Right cardiac atrium (tissue), 5 donors: ENCODE measurements at regions of chr9 and their contacts with region 1.

Region 1: DNA sequence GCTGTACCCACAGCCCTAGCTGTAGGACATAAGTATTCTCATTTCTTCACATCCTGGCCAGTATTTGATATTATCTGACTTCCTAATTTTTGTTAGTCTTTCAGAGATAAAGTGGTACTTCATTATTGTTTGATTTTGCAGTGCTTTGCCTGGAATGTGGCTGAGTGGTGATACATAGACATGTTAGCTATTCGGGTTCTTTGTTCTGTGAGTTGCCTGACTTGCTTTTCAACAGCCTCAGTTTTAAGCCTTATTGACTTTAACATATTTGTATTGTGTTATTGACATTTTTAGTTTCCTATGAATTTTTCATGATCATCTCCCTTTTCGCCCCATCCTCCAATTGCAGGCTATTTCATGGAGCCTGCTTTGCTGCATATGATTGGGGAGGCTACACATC is 161.1 kb downstream of the GABBR2 start:
- DNase-seq: no peak
- ATAC-seq: no peak
- H3K4me3 ChIP-seq: no peak overlapping the region
- H3K27ac ChIP-seq: no peak overlapping the region
- H3K4me1 ChIP-seq: no peaks in the 10 kb centered on the region
- H3K27me3 ChIP-seq: no peaks in the 10 kb centered on the region

Region 2: DNA sequence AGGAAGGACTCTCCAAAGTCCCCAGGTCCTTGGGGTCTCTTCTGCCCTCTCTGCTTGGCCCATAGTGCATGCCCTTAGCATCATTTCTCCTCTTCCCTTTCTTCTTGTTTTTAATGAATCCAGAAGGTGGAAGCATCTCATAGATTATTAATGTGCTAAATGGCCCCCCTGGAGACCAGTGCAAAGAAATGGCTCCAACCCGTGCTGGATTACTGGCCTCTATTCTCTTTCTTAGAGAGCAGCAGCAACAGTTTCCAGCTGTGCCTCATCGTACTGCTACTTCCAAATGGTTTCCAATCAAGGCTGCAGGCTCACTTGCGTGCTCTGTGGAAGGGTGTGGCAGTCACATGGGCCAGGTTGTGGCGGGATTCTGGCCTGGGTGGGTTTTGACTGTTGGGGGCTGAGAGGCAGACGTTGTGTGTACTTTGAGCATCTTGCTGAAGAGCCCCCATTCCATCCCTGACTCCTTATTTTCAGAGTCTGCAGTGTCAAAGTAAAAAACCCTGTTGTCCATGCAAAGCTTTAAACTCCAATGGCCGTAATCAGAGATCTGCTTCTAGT is 21.3 kb after region 1 on chr9:
- intact Hi-C with region 1: loop called in 1 of 4 experiments (anchors 2 kb)
- DNase-seq: no peak
- ATAC-seq: no peak
- H3K4me3 ChIP-seq: no peak overlapping the region
- H3K27ac ChIP-seq: no peak overlapping the region
- H3K4me1 ChIP-seq: no peaks in the 10 kb centered on the region
- H3K27me3 ChIP-seq: no peaks in the 10 kb centered on the region